AG04450 (cell line): ENCODE measurements at regions of chr15 and their contacts with region 1.

Region 1: DNA sequence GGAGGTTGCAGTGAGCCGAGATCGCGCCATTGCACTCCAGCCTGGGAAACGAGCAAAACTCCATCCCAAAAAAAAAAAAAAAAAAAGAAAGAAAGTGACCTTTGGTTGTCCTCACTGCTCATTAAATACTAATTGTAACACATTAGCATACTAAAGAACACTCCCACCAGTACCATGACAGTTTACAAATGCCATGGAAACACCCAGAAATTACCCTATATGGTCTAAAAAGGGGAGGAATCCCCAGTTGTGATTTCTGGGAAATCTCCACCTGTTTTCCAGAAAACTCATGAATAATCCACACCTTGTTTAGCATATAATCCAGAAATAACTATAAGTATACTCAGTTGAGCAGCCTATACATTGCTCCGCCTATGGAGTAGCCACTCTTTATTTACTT is 23.5 kb upstream of the INO80 start:
- DNase-seq: no peak
- H3K4me3 ChIP-seq: no peak overlapping the region
- H3K27ac ChIP-seq: no peak overlapping the region
- H3K27me3 ChIP-seq: no peaks in the 10 kb centered on the region
- CTCF ChIP-seq: no peak

Region 2: GRCh38 chr15:41121951-41122350 is 17.7 kb before region 1 on chr15:
- CTCF ChIA-PET with region 1: no interaction called
- POLR2A ChIA-PET with region 1: no interaction called
- DNase-seq: no peak
- H3K4me3 ChIP-seq: no peak overlapping the region
- H3K27ac ChIP-seq: no peak overlapping the region
- H3K27me3 ChIP-seq: no peaks in the 10 kb centered on the region
- CTCF ChIP-seq: no peak

Region 3: DNA sequence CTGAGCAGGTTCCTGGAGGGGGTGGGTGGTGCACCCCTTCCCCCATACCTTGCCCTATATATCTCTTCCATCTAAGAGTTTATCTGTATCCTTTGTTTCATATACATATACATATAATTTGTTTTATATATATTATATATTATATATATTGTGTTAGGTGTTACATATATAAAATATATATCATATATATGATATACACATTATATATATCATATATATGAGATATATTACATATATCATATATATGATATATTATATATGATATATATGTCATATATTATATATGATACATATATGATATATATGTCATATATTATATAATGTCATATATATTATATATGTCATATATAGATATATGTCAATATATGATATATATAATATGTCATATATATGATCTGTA is 59.9 kb after region 1 on chr15:
- CTCF ChIA-PET with region 1: no interaction called
- POLR2A ChIA-PET with region 1: interaction called, 11 read pairs
- DNase-seq: no peak
- H3K4me3 ChIP-seq: no peak overlapping the region
- H3K27ac ChIP-seq: no peak overlapping the region
- H3K27me3 ChIP-seq: no peaks in the 10 kb centered on the region
- CTCF ChIP-seq: no peak

Region 4: DNA sequence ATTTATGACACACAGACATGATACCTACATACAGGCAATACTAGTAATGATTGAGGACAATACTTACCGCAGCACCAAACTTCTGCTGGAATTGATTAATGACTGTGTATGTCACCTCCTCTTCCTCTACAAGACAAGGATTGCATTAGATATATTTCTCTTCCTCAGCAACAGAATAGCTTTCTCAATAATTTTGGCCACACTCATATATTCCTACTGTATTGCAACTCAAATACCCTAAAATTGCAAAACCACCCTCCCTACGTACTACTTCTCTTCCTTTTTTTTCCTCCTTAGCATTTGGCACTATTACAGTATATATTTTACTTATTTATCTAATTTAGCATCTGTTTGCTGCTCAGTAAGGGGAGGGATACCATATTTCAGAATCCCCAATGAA is 76.1 kb after region 1 on chr15:
- CTCF ChIA-PET with region 1: no interaction called
- POLR2A ChIA-PET with region 1: no interaction called
- DNase-seq: no peak
- H3K4me3 ChIP-seq: no peak overlapping the region
- H3K27ac ChIP-seq: no peak overlapping the region
- H3K27me3 ChIP-seq: peaks cover 12% of the 10 kb centered on the region
- CTCF ChIP-seq: no peak

Region 5: GRCh38 chr15:41660235-41661077 is 520.8 kb after region 1 on chr15 and contains the start of gene MGA:
- CTCF ChIA-PET with region 1: no interaction called
- POLR2A ChIA-PET with region 1: no interaction called
- DNase-seq: peak; percentile 81
- H3K4me3 ChIP-seq: peak within 1 kb of the TSS; percentile 69
- H3K27ac ChIP-seq: peak within 1 kb of the TSS; percentile 88
- H3K27me3 ChIP-seq: no peaks in the 10 kb centered on the region
- CTCF ChIP-seq: peak; percentile 15; the same call in 1 of the 2 replicates
- polyA plus RNA-seq, gene MGA: 8.5 and 9.7 TPM in 2 replicates